ENCODE measurements at regions of chr20 and their contacts with region 1.

Region 1: DNA sequence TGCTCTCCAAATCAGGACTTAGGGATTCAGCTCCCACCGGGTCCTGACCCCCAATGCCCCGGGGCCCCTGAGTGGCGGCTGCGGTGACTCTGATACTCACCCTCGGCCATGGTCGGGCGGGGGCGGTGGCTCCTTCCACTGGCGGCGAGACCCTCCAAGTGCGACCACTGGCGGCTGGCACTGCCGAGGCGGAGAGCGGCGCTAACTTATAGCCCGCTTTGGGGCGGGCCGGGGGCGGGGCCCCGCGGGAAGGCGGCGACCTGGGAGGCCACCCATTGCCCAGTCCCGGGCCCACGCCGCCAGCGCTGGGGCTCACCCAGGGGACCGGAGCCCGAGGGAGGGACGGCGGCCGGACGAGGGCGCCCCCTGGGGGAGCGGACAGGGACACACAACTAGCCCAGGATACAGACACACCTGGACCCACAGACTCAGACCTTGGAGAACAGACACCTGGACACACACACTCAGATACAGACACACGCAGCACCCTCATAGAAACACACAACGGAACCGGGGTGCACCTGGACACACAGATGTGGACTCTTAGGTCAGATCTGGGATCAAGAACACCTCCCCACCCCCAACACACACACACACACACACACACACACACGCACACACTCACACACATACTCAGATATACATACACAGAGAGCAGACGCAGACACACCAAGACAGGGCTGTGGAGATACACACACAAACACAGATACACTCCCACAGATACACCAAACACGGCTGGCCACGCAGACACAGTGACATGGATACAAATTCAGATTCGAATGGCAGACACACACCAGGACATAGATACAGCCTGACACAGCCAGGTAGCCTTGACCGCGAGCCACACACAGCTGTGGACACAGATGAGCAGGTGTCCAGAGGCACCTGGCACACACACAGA is at the start of gene TGM2:
- DNase-seq: peak; percentile 73 to 81
- H3K4me3 ChIP-seq: peak within 1 kb of the TSS in 1 of 3 donors; percentile 25
- H3K27ac ChIP-seq: peak within 1 kb of the TSS in 1 of 3 donors; percentile 14
- H3K4me1 ChIP-seq: peaks cover 0 to 28% of the 10 kb centered on the region in 2 donors
- H3K27me3 ChIP-seq: no peaks in the 10 kb centered on the region
- CTCF ChIP-seq: peak; percentile 70 to 91 (median 82)
- POLR2A ChIP-seq: no peak
- total RNA-seq, gene TGM2: 16.9 to 133 (median 18.4) TPM

Region 2: DNA sequence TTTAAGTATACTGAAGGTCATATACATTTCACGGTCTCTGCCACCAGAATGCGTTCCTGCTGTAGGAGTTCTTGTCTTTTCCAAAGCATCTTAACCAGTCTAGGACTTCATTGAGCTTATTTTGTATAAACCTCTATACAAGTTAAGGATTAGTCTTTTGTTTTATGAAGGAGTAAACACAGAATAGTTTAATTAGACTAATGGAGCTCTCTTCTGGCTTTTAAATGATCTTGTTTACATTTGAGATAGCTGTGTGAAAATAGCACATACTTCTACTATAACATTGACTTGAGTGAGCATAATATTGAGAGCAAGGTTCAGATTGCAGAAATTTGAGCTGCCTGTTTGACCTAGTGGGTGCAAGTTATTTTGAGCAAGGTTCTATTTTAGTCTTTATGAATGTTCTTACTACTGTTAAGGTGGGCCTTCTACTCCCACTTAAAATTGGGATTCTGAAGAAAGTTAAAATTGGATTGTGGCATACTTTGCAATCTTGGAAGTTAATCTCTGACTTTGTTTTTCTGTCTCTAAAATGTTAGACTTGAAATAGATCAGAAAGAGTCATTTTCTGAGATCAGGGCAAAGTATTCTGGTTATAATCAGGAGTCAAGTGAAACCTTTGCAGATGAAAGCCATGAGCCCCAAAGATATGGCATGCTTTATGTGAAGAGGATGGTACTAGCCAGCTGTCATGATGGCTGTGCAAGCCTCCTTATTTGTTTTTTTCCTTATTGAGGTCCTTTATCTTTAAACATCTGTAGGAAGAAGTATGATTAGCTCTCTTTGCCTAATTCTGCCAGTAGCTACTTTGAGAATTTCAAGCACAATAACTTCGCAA is 90.0 kb before region 1 on chr20:
- intact Hi-C with region 1: loop called (anchors 5 kb)
- DNase-seq: no peak
- H3K4me3 ChIP-seq: no peak overlapping the region
- H3K27ac ChIP-seq: no peak overlapping the region
- H3K4me1 ChIP-seq: peaks cover 9 to 15% of the 10 kb centered on the region in 2 donors
- H3K27me3 ChIP-seq: no peaks in the 10 kb centered on the region
- CTCF ChIP-seq: no peak
- POLR2A ChIP-seq: no peak

Region 3: GRCh38 chr20:38221119-38221589 is 55.8 kb after region 1 on chr20:
- intact Hi-C with region 1: no loop called
- DNase-seq: peak; percentile 54 to 58
- H3K4me3 ChIP-seq: no peak overlapping the region
- H3K27ac ChIP-seq: no peak overlapping the region
- H3K4me1 ChIP-seq: peaks cover 0 to 3% of the 10 kb centered on the region in 2 donors
- H3K27me3 ChIP-seq: no peaks in the 10 kb centered on the region
- CTCF ChIP-seq: peak; percentile 56 to 83 (median 72)
- POLR2A ChIP-seq: no peak

Measured in thyroid gland (tissue), 4 donors.